MCF 10A (cell line): ENCODE measurements at regions of chr13 and their contacts with region 1.

Region 1: GRCh38 chr13:102376318-102376717 is 25.5 kb downstream of the FGF14 start:
- DNase-seq: no peak
- H3K4me3 Mint-ChIP-seq: no peak overlapping the region
- H3K27ac Mint-ChIP-seq: no peak overlapping the region
- H3K4me1 Mint-ChIP-seq: no peaks in the 10 kb centered on the region
- H3K27me3 Mint-ChIP-seq: no peaks in the 10 kb centered on the region
- CTCF ChIP-seq: no peak

Region 2: DNA sequence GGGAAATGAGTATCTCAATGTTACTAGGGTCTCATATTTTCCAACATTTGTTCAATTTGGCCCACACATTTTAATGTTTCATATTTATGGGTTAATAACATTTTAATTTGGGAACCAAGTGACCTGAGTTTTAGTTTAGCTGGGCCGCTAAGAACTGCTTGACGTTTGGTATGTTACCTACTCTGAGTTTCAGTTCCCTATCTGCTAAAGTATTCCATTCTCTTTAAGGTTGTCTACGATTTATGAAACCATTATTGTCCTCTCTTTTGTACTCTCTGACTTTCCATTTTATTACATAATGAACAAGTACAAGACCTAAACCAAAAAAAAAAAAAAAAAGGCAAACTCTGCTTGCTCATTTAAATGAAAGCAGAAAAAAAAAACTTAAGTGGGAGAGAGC is 64.4 kb before region 1 on chr13:
- CTCF ChIA-PET with region 1: no interaction called
- POLR2A ChIA-PET with region 1: no interaction called
- intact Hi-C with region 1: loop called (anchors 2 kb)
- DNase-seq: no peak
- H3K4me3 Mint-ChIP-seq: no peak overlapping the region
- H3K27ac Mint-ChIP-seq: no peak overlapping the region
- H3K4me1 Mint-ChIP-seq: peaks cover 6% of the 10 kb centered on the region
- H3K27me3 Mint-ChIP-seq: no peaks in the 10 kb centered on the region
- CTCF ChIP-seq: no peak